SK-N-SH (cell line): ENCODE measurements at regions of chr17 and their contacts with region 1.

Region 1: GRCh38 chr17:50626037-50626574 is 8.6 kb upstream of the ABCC3 start:
- DNase-seq: peak; percentile 93
- H3K4me3 ChIP-seq: no peak overlapping the region; a peak in 1 of 4 replicates
- H3K27ac ChIP-seq: no peak overlapping the region
- H3K4me1 ChIP-seq: peaks cover 3 to 40% of the 10 kb centered on the region in 2 experiments; a peak in 3 of 4 replicates
- H3K27me3 ChIP-seq: no peaks in the 10 kb centered on the region
- CTCF ChIP-seq: peak; percentile 96
- EP300 ChIP-seq: no peak
- RAD21 ChIP-seq: peak; percentile 98

Region 2: DNA sequence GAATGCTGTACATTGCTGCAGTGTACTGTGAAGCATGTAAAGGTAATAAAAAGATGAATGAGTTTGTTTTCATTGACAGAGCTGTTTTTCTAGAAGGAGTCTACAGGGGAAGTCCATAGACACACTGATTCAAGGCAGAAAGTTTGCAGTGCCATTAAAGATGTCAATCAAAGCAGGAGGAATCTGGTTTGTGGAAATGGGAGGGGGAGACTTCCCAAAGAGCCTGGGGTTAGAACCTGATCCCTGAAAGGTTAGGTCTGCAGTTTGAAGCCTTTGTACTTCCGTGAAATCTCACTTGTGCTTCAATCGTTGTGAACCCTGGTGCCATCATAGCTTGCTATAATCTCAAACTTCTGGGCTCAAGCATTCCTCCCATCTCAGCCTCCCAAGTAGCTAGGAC is 194.9 kb before region 1 on chr17:
- CTCF ChIA-PET with region 1: no interaction called
- POLR2A ChIA-PET with region 1: no interaction called
- DNase-seq: no peak
- H3K4me3 ChIP-seq: no peak overlapping the region
- H3K27ac ChIP-seq: no peak overlapping the region
- H3K4me1 ChIP-seq: peaks cover 0 to 13% of the 10 kb centered on the region in 2 experiments; a peak in 1 of 4 replicates
- H3K27me3 ChIP-seq: no peaks in the 10 kb centered on the region
- CTCF ChIP-seq: no peak
- EP300 ChIP-seq: no peak
- RAD21 ChIP-seq: no peak

Region 3: GRCh38 chr17:50570528-50570927 is 55.6 kb before region 1 on chr17:
- CTCF ChIA-PET with region 1: interaction called, 209 read pairs
- POLR2A ChIA-PET with region 1: no interaction called
- DNase-seq: no peak
- H3K4me3 ChIP-seq: no peak overlapping the region
- H3K27ac ChIP-seq: no peak overlapping the region
- H3K4me1 ChIP-seq: peaks cover under 1 to 44% of the 10 kb centered on the region in 2 experiments; a peak in 3 of 4 replicates
- H3K27me3 ChIP-seq: no peaks in the 10 kb centered on the region; the same call in 1 of the 2 replicates
- CTCF ChIP-seq: no peak
- EP300 ChIP-seq: no peak
- RAD21 ChIP-seq: no peak

Region 4: GRCh38 chr17:50604513-50604912 is 21.6 kb before region 1 on chr17:
- CTCF ChIA-PET with region 1: interaction called, 402 read pairs
- POLR2A ChIA-PET with region 1: interaction called, 6 read pairs
- DNase-seq: peak; percentile 99
- H3K4me3 ChIP-seq: no peak overlapping the region
- H3K27ac ChIP-seq: peak overlapping the region in 1 of 2 experiments; percentile 93; a peak in 2 of 4 replicates
- H3K4me1 ChIP-seq: peaks cover 11 to 81% of the 10 kb centered on the region in 2 experiments
- H3K27me3 ChIP-seq: no peaks in the 10 kb centered on the region
- CTCF ChIP-seq: no peak
- EP300 ChIP-seq: peak in 1 of 2 experiments; percentile 84; a peak in 2 of 4 replicates
- RAD21 ChIP-seq: no peak; the same call in 1 of the 2 replicates

Region 5: DNA sequence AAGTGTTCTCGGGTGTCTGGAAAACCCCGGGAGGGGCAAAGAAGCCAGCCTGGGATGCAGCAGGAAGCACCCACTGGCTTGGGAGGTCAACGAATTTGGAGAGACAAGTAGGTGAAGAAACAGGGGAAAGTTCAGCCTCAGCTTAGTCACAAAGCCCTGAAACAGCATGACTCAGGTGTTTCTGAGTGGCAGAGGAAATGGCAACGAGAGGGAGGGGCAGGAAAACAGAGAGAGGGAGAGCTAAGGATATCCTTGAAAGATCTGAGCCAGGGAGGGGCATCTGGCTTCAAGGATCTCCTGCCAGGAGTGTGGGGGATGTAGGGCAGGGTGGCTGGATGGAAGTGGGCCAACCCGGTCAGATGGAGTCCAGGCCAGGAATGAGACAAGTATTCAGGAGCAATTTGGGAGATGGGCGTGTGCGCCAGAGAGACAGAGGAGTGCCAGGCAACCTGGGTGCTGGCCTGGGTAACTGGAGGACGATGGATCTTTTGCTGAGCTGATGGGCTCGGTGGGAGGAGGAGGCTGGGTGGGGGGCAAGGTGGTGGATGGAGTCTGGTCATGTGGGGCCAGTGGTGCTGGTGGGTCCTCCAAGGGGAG is 35.8 kb after region 1 on chr17:
- CTCF ChIA-PET with region 1: interaction called, 130 read pairs
- POLR2A ChIA-PET with region 1: interaction called, 4 read pairs
- DNase-seq: peak; percentile 73
- H3K4me3 ChIP-seq: no peak overlapping the region
- H3K27ac ChIP-seq: peak overlapping the region; percentile 77
- H3K4me1 ChIP-seq: peaks cover 39 to 44% of the 10 kb centered on the region in 2 experiments
- H3K27me3 ChIP-seq: no peaks in the 10 kb centered on the region
- CTCF ChIP-seq: no peak
- EP300 ChIP-seq: peak; percentile 40 to 93; a peak in 1 of 4 replicates
- RAD21 ChIP-seq: no peak

Region 6: DNA sequence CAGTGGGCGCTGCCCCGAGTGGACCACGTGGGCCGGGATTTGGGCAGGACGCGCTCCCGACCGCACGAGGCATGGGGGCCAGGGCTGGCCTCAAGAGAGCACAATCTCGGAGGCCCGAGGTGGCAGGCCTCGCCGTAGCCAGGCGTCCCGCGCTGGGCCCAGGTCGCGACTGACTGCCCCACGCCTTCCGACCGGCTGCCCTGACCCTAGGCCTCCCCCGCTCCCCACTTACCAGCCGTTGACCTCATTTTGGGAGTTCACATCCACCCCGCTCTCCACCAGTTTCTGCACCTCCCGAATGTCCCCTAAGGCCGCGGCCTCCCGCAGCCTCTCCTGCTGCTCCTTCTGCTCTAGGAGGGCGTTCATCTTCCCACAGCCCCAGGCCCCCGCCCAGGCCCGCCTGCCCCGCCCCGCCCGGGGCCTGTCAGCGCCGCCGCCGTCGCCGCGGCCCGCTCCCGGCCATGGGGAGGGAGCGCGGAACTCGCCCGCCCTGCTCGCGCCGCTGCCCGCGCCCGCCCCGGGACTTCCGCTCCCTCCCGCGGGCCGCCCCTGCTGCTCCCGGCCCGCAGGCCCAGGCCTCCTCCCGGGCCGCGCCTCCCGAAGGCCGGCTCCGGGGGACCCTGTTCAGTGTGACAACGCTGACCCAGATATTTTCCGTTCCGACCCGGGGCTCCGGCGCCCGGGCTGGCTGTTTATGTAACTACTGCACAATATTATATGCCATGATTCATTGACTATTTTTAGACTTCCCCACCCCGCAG is 81.4 kb after region 1 on chr17 and contains the start of gene ANKRD40:
- CTCF ChIA-PET with region 1: interaction called, 90 read pairs
- POLR2A ChIA-PET with region 1: no interaction called
- DNase-seq: peak; percentile 96
- H3K4me3 ChIP-seq: peak within 1 kb of the TSS; percentile 65 to 80
- H3K27ac ChIP-seq: peak within 1 kb of the TSS; percentile 95 to 98
- H3K4me1 ChIP-seq: peaks cover 10 to 15% of the 10 kb centered on the region in 2 experiments
- H3K27me3 ChIP-seq: no peaks in the 10 kb centered on the region
- CTCF ChIP-seq: no peak
- EP300 ChIP-seq: peak in 1 of 2 experiments; percentile 53; a peak in 1 of 4 replicates
- RAD21 ChIP-seq: no peak
- polyA plus RNA-seq, gene ANKRD40: 33.6 and 46.3 TPM in 2 replicates

Region 7: DNA sequence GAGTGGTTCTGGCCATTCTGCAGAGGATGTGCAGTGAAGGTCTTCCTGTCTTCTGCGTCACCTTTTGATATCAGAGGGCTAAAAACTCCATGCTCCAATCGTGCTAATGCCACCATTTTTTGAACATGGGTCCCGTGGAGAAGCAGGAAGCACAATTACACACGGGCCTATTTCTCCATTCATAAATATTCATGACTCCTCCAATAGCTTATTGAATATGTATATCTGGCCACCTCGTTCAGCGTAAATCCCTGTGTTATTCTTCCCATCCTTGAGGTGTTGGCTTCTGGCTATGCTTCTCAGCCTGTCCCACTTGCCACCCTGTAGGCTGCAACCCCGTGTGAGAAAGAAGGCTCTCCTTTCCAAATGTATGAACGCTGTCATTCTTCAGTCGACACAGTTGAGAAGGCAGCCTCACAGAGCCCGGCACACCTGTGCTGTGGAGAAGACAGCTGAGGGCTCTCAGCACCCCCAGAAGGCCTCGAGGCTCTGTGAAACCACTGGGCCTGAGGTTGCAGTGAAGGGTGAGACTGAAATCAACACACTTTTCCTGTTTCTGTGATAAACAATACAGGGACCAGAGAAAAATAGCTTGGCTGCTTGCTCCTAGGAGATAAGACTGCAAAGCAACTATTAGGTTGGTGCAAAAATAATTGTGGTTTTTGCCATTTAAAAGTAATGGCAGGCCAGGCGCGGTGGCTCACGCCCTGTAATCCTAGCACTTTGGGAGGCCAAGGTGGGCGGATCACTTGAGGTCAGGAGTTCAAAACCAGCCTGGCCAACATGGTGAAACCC is 146.1 kb after region 1 on chr17:
- CTCF ChIA-PET with region 1: no interaction called
- POLR2A ChIA-PET with region 1: no interaction called
- DNase-seq: no peak
- H3K4me3 ChIP-seq: no peak overlapping the region
- H3K27ac ChIP-seq: no peak overlapping the region
- H3K4me1 ChIP-seq: no peaks in the 10 kb centered on the region; a peak in 1 of 4 replicates
- H3K27me3 ChIP-seq: no peaks in the 10 kb centered on the region
- CTCF ChIP-seq: no peak
- EP300 ChIP-seq: no peak
- RAD21 ChIP-seq: no peak

Region 8: DNA sequence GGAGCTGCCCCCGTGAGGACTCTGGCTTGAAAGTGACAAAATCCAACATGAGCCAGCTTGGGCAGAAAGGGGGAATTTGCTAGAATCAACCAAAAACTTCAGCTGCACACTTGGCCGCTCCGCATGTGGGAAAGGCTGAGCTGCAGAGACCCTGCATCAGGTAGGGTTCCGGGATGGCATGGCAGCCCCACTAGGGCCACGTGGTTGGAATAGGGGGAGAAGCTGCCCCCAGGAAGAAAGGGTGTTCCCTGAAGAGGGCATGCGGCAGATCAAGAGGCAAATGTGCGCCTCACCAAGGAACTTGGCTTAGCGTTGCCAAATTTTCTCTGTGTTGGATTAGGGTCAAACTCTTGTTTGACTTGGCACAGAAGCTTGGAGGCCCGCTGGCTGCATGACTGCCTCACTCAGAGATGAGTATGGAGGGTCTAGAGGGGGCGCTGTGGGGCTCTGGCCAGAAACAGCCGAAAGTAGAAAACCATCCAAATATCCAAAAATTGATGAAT is 180.1 kb after region 1 on chr17:
- CTCF ChIA-PET with region 1: no interaction called
- POLR2A ChIA-PET with region 1: no interaction called
- DNase-seq: no peak
- H3K4me3 ChIP-seq: no peak overlapping the region
- H3K27ac ChIP-seq: no peak overlapping the region
- H3K4me1 ChIP-seq: no peaks in the 10 kb centered on the region
- H3K27me3 ChIP-seq: no peaks in the 10 kb centered on the region
- CTCF ChIP-seq: peak; percentile 48
- EP300 ChIP-seq: no peak
- RAD21 ChIP-seq: no peak